Activated naive CD4-positive, alpha-beta T cell treated with anti-CD3 and anti-CD28 coated beads for 36 hours (primary cell): ENCODE measurements at regions of chr3 and their contacts with region 1.

Region 1: DNA sequence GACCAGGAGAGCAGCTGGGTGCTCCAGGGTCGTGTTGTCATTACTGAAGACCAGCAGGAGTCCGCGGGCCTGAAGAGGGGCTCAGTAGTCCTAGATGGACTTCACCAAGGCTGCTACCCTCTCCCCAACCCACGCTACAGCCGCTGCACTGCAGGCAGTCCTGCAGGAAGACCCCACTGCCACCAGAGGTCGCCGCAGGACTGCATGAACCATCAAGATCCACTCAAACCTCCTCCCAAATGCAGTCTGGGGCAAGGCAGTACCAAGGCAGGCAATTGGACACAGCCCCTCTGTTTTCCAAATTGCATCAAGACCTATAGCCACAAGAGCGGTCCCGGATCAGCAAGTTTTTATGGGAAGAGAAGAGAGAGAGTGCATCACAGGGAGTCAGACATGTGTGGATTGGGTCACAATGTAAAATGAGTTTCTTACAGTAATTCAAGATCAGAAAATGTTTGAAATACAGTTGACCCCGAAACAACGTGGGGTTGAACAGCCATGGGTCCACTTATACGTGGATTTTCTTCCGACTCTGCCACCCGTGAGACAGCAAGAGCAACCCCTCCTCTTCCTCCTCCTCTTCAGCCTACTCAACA is 46.7 kb downstream of the DZIP1L start:
- DNase-seq: peak; percentile 87
- H3K4me3 Mint-ChIP-seq: no peak overlapping the region
- H3K27ac Mint-ChIP-seq: no peak overlapping the region
- H3K4me1 Mint-ChIP-seq: peaks cover 6% of the 10 kb centered on the region
- H3K27me3 Mint-ChIP-seq: peaks cover 10% of the 10 kb centered on the region

Region 2: DNA sequence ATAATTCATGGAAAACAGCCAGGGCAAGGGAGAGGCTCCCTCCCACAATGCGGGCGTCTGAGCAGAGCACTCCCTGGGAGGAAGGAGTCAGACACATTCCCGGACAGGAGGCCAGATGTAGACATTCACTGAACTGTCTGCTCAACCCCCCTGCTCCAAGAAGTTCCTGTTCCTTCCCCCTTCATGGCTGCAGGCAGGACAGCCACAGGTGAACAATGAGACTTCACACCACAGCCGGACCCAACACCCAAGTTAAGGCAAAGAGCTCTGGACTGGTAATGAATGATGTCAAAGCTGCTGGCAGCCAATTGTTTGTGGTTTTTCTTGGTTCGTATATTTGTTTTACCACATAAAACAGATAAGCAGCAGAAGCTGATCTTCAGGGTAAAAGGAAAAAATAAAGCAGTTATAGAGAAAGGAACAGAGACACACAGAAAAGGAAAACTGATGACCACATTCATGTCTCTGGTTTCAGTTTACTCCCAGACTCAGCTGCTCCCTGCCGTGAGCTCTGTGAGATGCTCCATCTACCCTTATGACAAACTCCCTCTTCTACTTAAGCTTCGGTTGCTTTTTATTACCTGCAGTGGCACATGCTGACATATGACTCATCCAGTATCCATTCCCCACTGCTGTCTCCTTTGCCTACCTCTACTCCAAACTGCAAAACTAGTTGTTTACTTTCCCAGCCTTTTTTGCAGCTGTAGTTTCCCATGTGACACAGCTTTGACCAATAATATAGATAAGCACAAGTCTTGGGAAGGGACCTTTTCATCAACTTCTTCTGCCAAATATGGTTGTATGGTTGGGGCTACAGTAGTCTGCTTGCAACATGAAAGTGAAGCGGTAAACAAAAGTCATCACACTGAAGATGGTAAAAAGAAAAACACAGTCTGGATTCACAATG is 13.7 kb after region 1 on chr3:
- CTCF ChIA-PET with region 1: interaction called, 11 read pairs
- intact Hi-C with region 1: loop called (anchors 1 kb)
- DNase-seq: peak; percentile 29
- H3K4me3 Mint-ChIP-seq: peak overlapping the region; percentile 36
- H3K27ac Mint-ChIP-seq: peak overlapping the region; percentile 63
- H3K4me1 Mint-ChIP-seq: peaks cover 29% of the 10 kb centered on the region
- H3K27me3 Mint-ChIP-seq: peaks cover 9% of the 10 kb centered on the region

Region 3: GRCh38 chr3:138118612-138119422 is 50.1 kb after region 1 on chr3:
- CTCF ChIA-PET with region 1: interaction called, 153 read pairs
- intact Hi-C with region 1: loop called (anchors 1 kb)
- DNase-seq: peak; percentile 76
- H3K4me3 Mint-ChIP-seq: no peak overlapping the region
- H3K27ac Mint-ChIP-seq: no peak overlapping the region
- H3K4me1 Mint-ChIP-seq: peaks cover 5% of the 10 kb centered on the region
- H3K27me3 Mint-ChIP-seq: peaks cover 32% of the 10 kb centered on the region

Region 4: DNA sequence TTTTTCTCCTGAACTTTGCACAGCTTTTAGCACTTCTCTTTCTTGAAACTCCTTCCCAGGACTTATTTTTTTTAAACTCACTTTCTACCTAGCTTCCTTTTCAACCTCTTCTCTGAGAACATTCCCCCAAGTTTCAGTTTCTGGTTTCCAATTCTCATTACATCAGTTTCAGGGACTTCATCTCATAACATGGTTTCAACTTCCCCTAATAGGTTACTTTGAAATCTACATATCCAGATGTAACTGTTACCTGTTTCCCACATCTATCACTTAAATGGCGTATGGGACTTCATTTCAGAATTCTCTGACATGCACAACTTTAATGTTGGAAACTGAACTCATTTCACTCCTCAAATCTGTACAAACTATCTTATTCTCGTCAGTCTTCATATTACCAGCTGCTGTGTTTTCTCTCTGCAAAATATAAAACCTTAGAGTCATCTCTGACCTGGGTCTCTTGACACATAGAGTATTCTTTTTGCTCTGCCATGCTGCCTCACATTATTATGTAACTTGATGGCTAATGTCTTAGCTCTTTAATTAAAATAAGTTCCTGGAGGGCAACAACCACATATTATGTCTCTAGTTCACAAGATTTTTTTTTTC is 202.6 kb after region 1 on chr3:
- CTCF ChIA-PET with region 1: no interaction called
- intact Hi-C with region 1: loop called (anchors 5 kb)
- DNase-seq: no peak
- H3K4me3 Mint-ChIP-seq: no peak overlapping the region
- H3K27ac Mint-ChIP-seq: peak overlapping the region; percentile 67
- H3K4me1 Mint-ChIP-seq: peaks cover 11% of the 10 kb centered on the region
- H3K27me3 Mint-ChIP-seq: no peaks in the 10 kb centered on the region

Region 5: DNA sequence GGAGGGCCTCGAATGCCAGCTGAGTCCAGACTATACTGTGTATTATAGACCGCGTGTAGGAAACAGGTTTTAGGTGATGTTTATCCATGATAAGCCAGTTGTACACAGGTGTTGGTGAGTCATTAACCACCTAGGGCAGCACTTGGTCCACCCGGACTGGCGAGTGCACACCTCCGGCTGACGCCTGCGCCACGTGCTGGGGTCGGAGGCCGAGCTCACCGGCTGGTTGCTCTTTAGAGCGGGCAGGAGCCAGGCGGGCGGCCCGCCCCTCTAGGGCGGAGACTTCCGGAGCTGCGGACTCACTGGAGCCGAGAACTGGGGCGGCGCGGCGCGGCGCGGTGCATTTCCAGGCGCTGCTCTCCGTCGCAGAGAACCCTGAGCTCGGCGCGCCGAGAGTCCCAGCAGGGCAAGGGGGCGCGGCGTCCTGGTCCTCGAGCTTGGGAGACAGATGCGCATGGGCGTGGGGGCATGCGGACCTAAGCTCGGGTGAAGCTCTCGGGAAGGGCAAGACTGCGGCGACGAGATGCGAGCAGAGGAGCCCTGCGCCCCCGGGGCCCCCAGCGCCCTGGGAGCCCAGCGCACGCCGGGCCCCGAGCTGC is 365.7 kb after region 1 on chr3 and contains the start of gene ESYT3:
- CTCF ChIA-PET with region 1: no interaction called
- intact Hi-C with region 1: loop called (anchors 5 kb)
- DNase-seq: peak; percentile 82
- H3K4me3 Mint-ChIP-seq: peak within 1 kb of the TSS; percentile 75
- H3K27ac Mint-ChIP-seq: no peak within 1 kb of the TSS
- H3K4me1 Mint-ChIP-seq: peaks cover 11% of the 10 kb centered on the region
- H3K27me3 Mint-ChIP-seq: peaks cover 55% of the 10 kb centered on the region
- total RNA-seq, gene ESYT3: 0.96 to 1.1 TPM

Region 6: DNA sequence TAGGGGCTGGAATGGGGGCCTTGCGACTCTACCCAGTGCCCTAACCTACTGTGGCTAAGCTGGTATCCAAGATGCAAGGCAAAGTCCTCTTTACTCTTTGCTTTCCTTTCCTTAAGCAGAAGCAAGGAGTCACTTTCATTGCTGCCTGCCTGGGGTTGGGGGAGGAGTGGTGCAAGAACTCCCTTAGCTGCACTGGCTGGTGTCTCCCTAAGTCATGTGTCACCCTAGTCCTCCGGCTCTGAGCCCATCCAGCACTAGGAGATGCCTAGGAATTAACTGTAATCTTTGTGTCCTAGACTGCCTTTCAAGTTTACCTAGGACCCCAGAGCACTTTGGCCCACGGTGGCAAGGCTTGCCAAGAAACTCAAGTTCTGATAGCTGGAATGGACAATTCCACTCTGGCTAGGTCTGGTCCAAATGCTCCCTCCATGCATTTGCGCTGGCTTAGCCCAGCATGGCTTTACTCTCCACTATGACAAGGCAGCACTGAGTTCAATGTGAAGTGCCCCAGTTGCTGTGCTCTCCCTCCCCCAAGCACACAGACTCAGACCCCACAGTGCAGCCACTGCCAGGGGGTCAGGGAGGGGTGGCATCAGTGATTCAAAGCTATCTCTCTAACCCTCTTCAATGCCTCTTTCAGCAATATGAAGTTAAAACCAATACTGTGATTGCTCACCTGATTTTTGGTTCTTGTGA is 424.5 kb after region 1 on chr3:
- CTCF ChIA-PET with region 1: no interaction called
- intact Hi-C with region 1: no loop called
- DNase-seq: no peak
- H3K4me3 Mint-ChIP-seq: no peak overlapping the region
- H3K27ac Mint-ChIP-seq: no peak overlapping the region
- H3K4me1 Mint-ChIP-seq: peaks cover 3% of the 10 kb centered on the region
- H3K27me3 Mint-ChIP-seq: no peaks in the 10 kb centered on the region